GM10248 (cell line): ENCODE measurements at regions of chr2 and their contacts with region 1.

Region 1: GRCh38 chr2:180722551-180723239 is 257.7 kb upstream of the UBE2E3 start:
- DNase-seq: no peak
- CTCF ChIP-seq: no peak

Region 2: GRCh38 chr2:180707884-180708205 is 14.8 kb before region 1 on chr2:
- CTCF ChIA-PET with region 1: interaction called, 11 read pairs
- POLR2A ChIA-PET with region 1: no interaction called
- DNase-seq: no peak
- CTCF ChIP-seq: no peak